ENCODE measurements at regions of chr3 and their contacts with region 1.

Region 1: GRCh38 chr3:152444029-152444641 is 175.4 kb downstream of the MBNL1 start:
- DNase-seq: no peak
- H3K4me3 ChIP-seq: no peak overlapping the region
- H3K27ac ChIP-seq: peak overlapping the region; percentile 4 to 58 (median 42)
- H3K4me1 ChIP-seq: peaks cover 0 to 65% (median 10%) of the 10 kb centered on the region in 4 donors
- H3K27me3 ChIP-seq: no peaks in the 10 kb centered on the region
- CTCF ChIP-seq: peak; percentile 58 to 81 (median 69)
- EP300 ChIP-seq: no peak
- POLR2A ChIP-seq: no peak

Region 2: GRCh38 chr3:152071924-152072323 is 372.2 kb before region 1 on chr3:
- in situ Hi-C with region 1: loop called (anchors 10 to 25 kb)
- intact Hi-C with region 1: no loop called
- DNase-seq: no peak
- H3K4me3 ChIP-seq: no peak overlapping the region
- H3K27ac ChIP-seq: no peak overlapping the region
- H3K4me1 ChIP-seq: no peaks in the 10 kb centered on the region
- H3K27me3 ChIP-seq: no peaks in the 10 kb centered on the region
- CTCF ChIP-seq: peak in 4 of 5 experiments; percentile 31 to 37 (median 34)
- EP300 ChIP-seq: no peak
- POLR2A ChIP-seq: no peak

Region 3: DNA sequence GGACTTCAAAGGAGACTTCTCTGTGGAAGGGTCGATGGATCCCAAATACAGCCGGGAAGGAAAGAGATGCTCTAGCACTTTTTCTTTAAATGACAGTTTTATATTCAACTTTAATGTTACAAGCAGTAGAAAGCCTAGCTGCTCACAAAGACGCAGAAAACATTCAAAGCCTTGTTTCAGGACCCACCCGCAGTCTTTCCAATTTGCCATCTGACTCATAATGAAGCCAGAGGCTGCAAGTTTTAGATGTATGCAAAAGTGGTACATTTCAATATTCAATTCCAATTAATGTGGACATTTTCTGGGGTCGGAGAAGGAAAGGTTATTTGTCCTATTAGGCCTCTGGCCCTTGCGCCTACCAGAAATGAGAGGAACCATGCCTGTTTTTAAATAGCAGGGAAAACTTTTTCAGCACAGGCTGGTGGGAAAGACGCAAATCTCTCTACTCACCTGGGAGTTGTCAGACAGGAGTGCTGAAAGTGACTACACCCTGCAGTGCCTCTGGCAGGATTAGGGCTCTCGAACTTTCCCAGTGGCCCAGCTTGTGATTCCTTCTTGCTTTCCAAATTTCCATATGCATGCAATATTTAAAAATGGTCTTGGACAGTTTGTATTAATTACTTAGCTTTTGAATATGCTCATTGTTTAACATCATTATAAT is 292.8 kb before region 1 on chr3:
- in situ Hi-C with region 1: no loop called
- intact Hi-C with region 1: no loop called
- DNase-seq: no peak
- H3K4me3 ChIP-seq: no peak overlapping the region
- H3K27ac ChIP-seq: peak overlapping the region in 2 of 4 donors; percentile 32 to 44
- H3K4me1 ChIP-seq: peaks cover 0 to 10% (median 0%) of the 10 kb centered on the region in 4 donors
- H3K27me3 ChIP-seq: no peaks in the 10 kb centered on the region
- CTCF ChIP-seq: no peak
- EP300 ChIP-seq: no peak
- POLR2A ChIP-seq: no peak

Region 4: GRCh38 chr3:152183473-152183872 is 260.7 kb before region 1 on chr3:
- in situ Hi-C with region 1: loop called in 3 of 4 experiments (anchors 10 to 25 kb)
- intact Hi-C with region 1: no loop called
- DNase-seq: no peak
- H3K4me3 ChIP-seq: no peak overlapping the region
- H3K27ac ChIP-seq: no peak overlapping the region
- H3K4me1 ChIP-seq: no peaks in the 10 kb centered on the region
- H3K27me3 ChIP-seq: no peaks in the 10 kb centered on the region
- CTCF ChIP-seq: peak in 2 of 5 experiments; percentile 24 to 32
- EP300 ChIP-seq: no peak
- POLR2A ChIP-seq: no peak

Region 5: DNA sequence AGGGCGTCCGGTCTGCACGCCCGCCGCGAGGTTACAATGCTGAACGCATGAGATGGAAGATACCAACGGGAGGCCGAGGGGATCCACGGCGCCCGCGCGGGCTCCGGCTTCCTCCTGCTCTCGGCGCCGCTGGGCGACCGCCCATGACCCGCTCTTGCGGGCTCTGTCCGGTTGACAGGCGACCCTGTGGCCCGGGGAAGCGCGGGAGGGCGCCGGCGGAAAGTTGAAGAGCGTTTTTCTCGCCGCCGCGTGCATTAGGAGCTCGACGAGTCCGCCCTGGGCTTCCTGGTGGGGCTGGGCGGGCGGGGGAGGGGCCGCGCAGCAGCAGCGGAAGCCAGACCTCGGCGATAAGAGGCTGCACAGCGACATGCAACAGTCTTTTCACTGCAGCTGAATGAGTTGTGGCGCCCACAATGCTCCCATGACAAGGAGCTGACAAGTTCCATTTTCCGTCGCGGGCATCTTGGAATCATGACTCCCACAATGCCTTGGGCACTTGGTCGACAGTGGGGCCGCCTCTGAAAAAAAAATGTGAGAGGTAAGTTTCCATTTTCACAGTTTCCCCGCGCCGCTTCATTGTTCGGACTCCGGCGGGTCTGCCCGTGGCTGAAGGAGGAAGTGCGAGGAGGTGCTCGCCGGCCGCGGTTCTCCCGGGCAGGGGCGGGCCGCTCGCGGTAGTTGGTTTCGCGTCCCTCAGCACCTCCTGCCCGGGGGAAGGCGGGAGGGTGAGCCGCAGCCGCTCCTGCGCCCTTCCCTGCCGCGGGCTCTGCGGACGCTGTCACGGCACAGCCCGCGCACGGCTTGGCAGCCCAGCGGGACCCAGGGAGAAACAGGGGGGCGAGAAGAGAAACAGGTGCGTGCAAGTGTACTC is 175.3 kb before region 1 on chr3 and contains the start of gene MBNL1:
- in situ Hi-C with region 1: loop called in 1 of 4 experiments (anchors 25 kb)
- intact Hi-C with region 1: no loop called
- DNase-seq: peak; percentile 89
- H3K4me3 ChIP-seq: peak within 1 kb of the TSS; percentile 67 to 92 (median 80)
- H3K27ac ChIP-seq: peak within 1 kb of the TSS; percentile 96 to 100 (median 98)
- H3K4me1 ChIP-seq: peaks cover 18 to 68% (median 36%) of the 10 kb centered on the region in 4 donors
- H3K27me3 ChIP-seq: no peaks in the 10 kb centered on the region
- CTCF ChIP-seq: peak in 1 of 5 experiments; percentile 12
- EP300 ChIP-seq: no peak
- POLR2A ChIP-seq: peak; percentile 81
- total RNA-seq, gene MBNL1: 232 to 658 (median 509) TPM

Region 6: GRCh38 chr3:152298393-152299242 is 145.5 kb before region 1 on chr3:
- in situ Hi-C with region 1: loop called in 1 of 4 experiments (anchors 25 kb)
- intact Hi-C with region 1: loop called (anchors 1 kb)
- DNase-seq: peak; percentile 57
- H3K4me3 ChIP-seq: peak overlapping the region in 3 of 4 donors; percentile 13 to 44 (median 26)
- H3K27ac ChIP-seq: peak overlapping the region; percentile 88 to 91 (median 90)
- H3K4me1 ChIP-seq: peaks cover 27 to 98% (median 68%) of the 10 kb centered on the region in 4 donors
- H3K27me3 ChIP-seq: no peaks in the 10 kb centered on the region
- CTCF ChIP-seq: no peak
- EP300 ChIP-seq: no peak
- POLR2A ChIP-seq: peak; percentile 57

Region 7: DNA sequence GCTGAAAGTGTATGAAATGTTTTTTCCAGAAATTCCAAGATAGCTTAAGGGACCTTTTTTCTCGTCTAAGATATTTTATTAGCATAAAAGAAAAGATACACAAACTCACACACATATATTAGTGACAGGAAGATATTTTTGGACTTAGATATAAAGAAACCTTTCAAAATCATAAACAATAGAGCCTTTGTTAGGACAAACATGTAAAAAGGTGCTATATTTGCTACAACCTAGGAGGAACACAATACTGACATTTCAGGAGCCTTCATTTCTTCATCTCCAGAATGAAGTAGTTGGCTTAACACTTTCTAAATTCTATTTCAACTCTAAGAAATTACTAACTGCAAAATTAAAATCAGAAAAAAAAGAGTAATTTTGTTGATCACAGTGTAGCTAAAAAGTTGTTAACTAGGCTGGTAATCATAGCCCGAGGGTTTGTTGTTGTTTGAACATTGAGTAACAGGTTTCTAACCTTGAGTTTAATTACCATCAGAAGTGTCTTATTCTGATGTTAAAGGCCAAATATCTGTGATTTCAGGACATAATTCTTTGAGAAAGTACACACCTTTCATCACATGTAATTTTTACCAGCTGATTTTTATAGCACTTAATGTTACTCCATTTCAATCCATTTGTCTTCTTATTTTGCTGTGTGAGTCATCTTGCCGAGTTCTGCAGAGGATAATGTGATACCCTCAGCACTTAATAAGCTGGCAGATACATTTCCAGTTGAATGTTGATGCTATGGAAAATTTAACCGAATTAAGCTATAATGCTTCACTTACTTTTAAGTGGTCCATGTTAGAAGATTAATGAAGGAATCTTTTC is 78.2 kb before region 1 on chr3:
- in situ Hi-C with region 1: no loop called
- intact Hi-C with region 1: no loop called
- DNase-seq: no peak
- H3K4me3 ChIP-seq: no peak overlapping the region
- H3K27ac ChIP-seq: peak overlapping the region in 2 of 4 donors; percentile 21 to 53
- H3K4me1 ChIP-seq: peaks cover 6 to 73% (median 23%) of the 10 kb centered on the region in 4 donors
- H3K27me3 ChIP-seq: no peaks in the 10 kb centered on the region
- CTCF ChIP-seq: no peak
- EP300 ChIP-seq: no peak
- POLR2A ChIP-seq: no peak

Region 8: DNA sequence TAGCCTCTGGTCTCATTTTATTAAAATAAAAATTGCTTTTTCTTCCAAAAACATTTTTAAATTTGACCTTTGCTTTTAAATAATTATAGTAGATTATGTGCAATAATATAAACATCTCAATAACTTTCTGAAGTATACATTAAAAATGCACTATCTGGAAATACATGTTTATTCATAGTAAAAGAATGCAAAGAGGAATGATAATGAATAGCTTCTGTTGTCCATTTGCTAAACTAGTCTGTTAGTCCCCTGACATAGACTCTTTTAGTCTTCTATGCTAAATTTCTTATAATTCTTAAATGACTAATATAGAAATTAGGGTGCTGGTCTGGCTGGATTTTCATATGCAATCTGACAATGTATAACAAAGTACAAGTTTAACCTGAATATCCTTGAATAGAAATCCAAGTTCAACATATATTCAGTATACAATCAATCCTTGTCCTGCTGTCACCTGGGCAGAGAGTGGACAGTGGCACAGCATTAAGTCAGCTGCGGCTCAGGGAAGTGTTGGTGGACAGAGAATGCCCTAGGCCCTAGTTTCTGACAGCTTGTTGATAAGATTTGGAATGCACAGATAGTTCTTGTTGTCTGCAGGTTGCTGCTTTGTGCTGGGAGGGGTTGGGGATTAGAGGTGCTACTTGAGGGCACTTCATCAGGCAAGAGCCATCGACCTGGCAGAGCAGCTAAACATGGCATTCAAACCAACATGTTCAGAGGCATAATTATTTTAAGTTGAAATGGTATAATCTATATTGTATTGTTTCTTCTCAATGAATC is 13.7 kb before region 1 on chr3:
- in situ Hi-C with region 1: no loop called
- intact Hi-C with region 1: no loop called
- DNase-seq: no peak
- H3K4me3 ChIP-seq: no peak overlapping the region
- H3K27ac ChIP-seq: peak overlapping the region in 3 of 4 donors; percentile 3 to 38 (median 23)
- H3K4me1 ChIP-seq: peaks cover 0 to 12% (median 0%) of the 10 kb centered on the region in 4 donors
- H3K27me3 ChIP-seq: no peaks in the 10 kb centered on the region
- CTCF ChIP-seq: no peak
- EP300 ChIP-seq: no peak
- POLR2A ChIP-seq: no peak